Activated T-helper 1 cell treated with anti-CD3 and anti-CD28 coated beads, Interleukin-12 subunit alpha, Interleukin-12 subunit beta, Interleukin-2, Interleukin-4 antibody, amounts not matched to agents 30 ng/mL and 10 ng/mL and 1 ng/mL, durations not matched to agents 14 hours and 24 hours and 36 hours (primary cell): ENCODE measurements at regions of chr5 and their contacts with region 1.

Region 1: DNA sequence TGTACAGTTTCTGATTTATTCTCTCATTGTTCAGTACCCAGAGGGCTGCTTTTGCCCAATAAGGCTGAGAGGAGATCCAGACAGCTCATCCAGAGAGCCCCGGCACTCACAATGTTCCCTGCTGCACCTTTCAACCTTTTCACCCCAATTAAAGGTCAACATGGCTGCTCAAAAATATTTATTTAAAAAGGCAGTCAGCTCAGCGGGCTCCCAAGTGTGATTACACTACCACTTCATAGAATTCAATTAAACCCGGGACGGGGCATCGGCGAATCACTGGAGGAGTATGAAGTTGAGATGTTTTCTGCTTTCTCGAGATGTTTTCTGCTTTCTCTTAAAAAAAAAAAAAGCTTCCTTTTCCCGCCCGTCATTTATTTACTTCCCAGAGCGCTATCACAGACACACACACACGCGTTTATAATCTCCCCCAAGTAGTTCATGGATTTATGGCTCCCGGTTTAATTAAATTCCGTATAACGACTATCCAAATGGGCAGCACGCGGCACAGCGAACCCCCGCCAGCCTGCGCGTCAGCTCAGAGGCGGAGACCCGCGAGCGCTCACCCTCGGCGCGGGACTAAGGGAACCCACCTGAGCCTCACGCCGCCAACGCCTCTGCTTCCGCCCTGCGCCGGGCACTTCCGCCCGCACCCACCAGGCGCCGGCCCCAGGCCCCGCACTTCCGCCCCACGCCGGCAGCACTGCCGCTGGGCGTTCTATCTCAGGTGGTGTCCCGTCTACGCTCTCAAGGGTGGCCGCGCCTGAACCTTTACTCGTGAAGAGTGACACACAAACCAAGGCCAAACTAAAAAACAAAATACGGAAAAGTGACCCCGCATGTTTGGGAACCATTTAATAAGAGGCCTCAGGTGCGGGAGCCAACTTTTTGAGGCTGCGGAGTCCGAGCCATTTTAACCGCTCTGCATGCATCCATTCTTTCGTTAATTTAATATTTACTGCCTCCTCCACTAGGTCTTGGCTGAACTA is at the start of gene C5orf63:
- DNase-seq: peak; percentile 66
- H3K4me3 Mint-ChIP-seq: peak within 1 kb of the TSS; percentile 92
- H3K27ac Mint-ChIP-seq: peak within 1 kb of the TSS; percentile 88
- H3K4me1 Mint-ChIP-seq: peaks cover 22% of the 10 kb centered on the region
- H3K27me3 Mint-ChIP-seq: no peaks in the 10 kb centered on the region
- total RNA-seq, gene C5orf63: 4.0 and 7.0 TPM in 2 replicates

Region 2: GRCh38 chr5:126422989-126423788 is 650.0 kb before region 1 on chr5 and contains the start of gene GRAMD2B:
- intact Hi-C with region 1: no loop called
- DNase-seq: peak; percentile 53
- H3K4me3 Mint-ChIP-seq: peak within 1 kb of the TSS; percentile 86
- H3K27ac Mint-ChIP-seq: peak within 1 kb of the TSS; percentile 81
- H3K4me1 Mint-ChIP-seq: peaks cover 40% of the 10 kb centered on the region
- H3K27me3 Mint-ChIP-seq: no peaks in the 10 kb centered on the region
- total RNA-seq, gene GRAMD2B: 8.3 and 9.5 TPM in 2 replicates

Region 3: DNA sequence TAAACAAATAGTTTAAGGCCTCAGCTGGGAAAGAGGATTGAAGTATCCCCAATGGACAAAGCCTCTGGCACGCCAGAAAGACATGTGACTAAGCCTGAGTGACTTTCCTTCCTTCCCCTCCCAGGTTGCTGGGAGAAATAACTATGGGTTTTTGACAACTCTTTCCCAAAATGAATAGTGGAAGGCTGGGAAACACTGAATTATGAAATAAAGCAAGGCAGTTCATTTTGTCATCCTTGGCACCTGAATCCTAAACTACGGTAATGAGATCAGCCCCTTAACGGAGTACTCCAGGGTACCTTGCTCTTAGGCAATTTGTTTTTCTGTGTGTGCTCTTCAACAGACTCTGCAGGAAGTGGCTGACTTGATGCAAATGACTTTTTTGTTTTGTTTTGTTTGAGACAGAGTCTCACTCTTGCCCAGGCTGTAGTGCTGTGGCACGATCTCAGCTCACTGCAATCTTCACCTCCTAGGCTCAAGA is 221.0 kb before region 1 on chr5:
- intact Hi-C with region 1: loop called (anchors 5 kb)
- DNase-seq: peak; percentile 28
- H3K4me3 Mint-ChIP-seq: peak overlapping the region; percentile 80
- H3K27ac Mint-ChIP-seq: peak overlapping the region; percentile 87
- H3K4me1 Mint-ChIP-seq: peaks cover 43% of the 10 kb centered on the region
- H3K27me3 Mint-ChIP-seq: no peaks in the 10 kb centered on the region

Region 4: DNA sequence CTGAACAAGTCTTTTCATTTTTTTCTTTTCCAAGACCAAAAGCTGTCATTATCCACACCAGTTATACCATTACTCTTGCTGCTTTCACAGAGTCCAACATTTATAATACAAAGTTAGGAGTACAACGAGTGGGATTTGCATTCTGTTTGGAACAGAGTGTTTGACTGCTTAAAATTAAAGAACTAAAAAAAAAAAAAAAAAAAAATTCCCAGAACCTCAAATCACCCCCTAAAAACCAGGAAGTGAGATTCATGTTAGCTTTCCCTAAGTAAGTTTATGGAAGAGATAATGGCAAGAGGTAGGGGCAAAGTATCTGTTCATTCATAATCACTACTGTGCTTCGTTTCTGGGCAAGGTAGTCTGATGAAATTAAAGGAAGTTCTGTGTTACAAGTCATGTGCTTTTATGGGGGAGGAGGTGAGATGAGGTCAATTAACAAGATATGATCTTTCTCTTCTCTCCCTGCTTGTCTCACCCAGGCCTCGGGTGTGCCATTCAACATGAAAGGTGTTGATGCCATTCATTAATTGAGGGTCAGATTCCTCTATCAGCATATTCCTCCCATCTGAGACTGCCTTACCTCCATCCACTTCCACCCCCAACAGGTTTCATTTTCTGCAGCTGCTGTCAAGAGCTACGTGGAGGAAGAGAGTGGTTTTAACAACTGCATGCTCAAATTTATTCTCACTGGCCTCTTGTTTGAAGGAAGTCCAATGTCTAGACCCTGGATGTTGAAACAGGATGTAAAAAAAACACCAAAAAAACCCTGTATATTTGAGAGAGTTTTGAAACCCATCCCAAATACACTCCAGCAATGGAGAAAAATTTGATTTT is 100.9 kb before region 1 on chr5:
- intact Hi-C with region 1: loop called (anchors 5 kb)
- DNase-seq: peak; percentile 31
- H3K4me3 Mint-ChIP-seq: peak overlapping the region; percentile 58
- H3K27ac Mint-ChIP-seq: peak overlapping the region; percentile 90
- H3K4me1 Mint-ChIP-seq: peaks cover 47% of the 10 kb centered on the region
- H3K27me3 Mint-ChIP-seq: no peaks in the 10 kb centered on the region

Region 5: GRCh38 chr5:127229185-127229889 is 156.2 kb after region 1 on chr5:
- intact Hi-C with region 1: loop called (anchors 5 kb)
- DNase-seq: peak; percentile 34
- H3K4me3 Mint-ChIP-seq: peak overlapping the region; percentile 38
- H3K27ac Mint-ChIP-seq: no peak overlapping the region
- H3K4me1 Mint-ChIP-seq: peaks cover 5% of the 10 kb centered on the region
- H3K27me3 Mint-ChIP-seq: peaks cover 1% of the 10 kb centered on the region